ENCODE measurements at regions of chr18 and their contacts with region 1.

Region 1: GRCh38 chr18:63320046-63320689 is 599 bp upstream of the BCL2 start:
- DNase-seq: peak; percentile 77
- H3K4me3 ChIP-seq: peak overlapping the region; percentile 72
- H3K27ac ChIP-seq: no peak overlapping the region
- H3K4me1 ChIP-seq: peaks cover 17% of the 10 kb centered on the region
- CTCF ChIP-seq: no peak

Region 2: GRCh38 chr18:63016270-63016669 is 303.9 kb before region 1 on chr18:
- CTCF ChIA-PET with region 1: no interaction called
- POLR2A ChIA-PET with region 1: no interaction called
- intact Hi-C with region 1: loop called (anchors 1 kb)
- DNase-seq: peak; percentile 39
- H3K4me3 ChIP-seq: no peak overlapping the region
- H3K27ac ChIP-seq: no peak overlapping the region
- H3K4me1 ChIP-seq: no peaks in the 10 kb centered on the region
- CTCF ChIP-seq: peak; percentile 76

Region 3: DNA sequence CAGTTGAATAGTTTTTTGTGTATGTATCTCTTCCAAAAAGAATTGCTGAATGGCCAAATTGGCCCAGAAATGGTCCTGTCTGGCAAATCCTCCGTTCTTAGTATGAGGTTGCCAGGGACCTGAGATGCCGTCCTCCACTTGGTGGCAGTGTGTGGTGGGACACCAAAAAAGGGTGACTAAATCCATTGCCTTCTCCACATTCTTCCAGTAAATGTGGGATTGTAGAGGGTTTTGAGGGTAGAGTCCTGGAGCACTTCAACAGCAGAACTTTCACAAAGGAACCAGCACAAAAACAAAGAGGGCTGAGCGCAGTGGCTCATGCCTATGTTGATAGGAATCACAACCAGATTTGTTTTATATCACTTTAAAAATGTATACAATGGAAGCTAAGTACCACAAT is 200.5 kb before region 1 on chr18:
- CTCF ChIA-PET with region 1: no interaction called
- POLR2A ChIA-PET with region 1: interaction called, 4 read pairs
- intact Hi-C with region 1: loop called (anchors 5 kb)
- DNase-seq: no peak
- H3K4me3 ChIP-seq: no peak overlapping the region
- H3K27ac ChIP-seq: no peak overlapping the region
- H3K4me1 ChIP-seq: no peaks in the 10 kb centered on the region
- CTCF ChIP-seq: peak; percentile 63

Region 4: DNA sequence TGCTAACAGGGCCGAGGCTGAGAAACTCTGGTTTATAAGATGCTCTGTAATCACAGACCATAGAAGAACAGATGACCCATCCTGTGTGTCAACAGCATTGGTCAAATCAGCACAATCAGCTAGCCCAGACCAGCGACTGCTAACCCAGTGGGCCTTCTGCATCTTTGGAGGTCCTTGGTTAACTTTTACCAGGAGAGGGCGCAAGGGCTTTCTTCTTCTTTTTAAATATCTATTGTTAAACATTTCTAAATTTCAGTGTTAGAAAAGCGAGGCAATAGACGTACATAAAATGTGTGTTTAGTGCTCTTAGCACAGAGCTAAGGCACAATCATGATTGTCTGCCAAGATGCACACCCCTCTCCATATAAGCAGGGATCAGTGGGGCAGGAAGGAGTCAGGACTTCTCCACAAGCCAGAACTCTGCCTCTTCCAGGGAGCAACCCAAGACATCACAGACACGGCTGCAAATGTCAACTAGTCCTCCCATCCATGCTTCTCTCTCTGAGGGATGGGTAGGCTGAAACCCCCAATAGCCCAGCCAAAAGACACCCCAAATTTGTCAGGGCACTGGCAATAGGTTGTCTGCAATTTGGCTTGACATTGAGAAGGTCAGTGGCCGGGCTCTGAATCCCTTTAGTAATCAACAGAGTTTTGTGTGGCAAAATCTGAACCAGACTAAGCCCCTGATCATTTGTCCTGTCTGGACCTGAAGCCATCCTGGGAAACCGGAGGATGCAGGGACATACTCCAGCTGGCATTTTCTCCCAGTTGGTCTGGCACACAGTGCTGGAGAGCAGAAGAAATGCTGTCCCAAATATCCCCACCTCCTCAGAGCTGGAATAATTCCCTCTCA is 188.8 kb before region 1 on chr18:
- CTCF ChIA-PET with region 1: interaction called, 4 read pairs
- POLR2A ChIA-PET with region 1: no interaction called
- intact Hi-C with region 1: loop called (anchors 2 kb)
- DNase-seq: peak; percentile 50
- H3K4me3 ChIP-seq: no peak overlapping the region
- H3K27ac ChIP-seq: no peak overlapping the region
- H3K4me1 ChIP-seq: peaks cover 4% of the 10 kb centered on the region
- CTCF ChIP-seq: peak; percentile 77

Region 5: DNA sequence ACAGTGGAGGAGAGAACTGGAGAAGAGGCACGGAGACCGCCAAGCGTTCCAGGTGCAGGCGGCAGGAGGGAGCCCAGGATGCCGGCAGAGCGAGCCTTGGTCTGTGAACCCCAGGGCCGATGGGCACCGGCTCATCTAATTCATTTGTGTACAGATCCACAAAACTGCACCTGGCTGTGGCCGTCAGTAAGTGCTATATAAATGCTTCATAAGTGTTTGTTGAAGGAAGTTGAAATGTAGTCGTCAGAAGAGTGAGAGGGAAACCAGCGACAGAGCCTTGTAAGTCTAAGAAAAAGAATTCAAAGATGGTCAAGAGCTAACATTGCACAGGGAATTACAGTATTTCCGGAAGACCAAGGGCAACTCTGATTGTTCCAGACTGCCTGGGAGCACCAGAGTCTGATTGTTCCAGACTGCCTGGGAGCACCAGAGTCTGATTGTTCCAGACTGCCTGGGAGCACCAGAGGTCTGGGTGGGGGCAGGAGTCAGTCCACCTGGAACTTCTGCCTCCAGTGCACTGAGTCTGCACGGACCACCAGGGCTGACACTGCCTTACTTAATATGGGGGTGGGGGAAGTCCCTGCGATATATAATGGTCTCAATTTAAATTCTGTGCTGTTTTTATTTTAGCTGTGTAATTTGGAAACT is 112.9 kb before region 1 on chr18:
- CTCF ChIA-PET with region 1: no interaction called
- POLR2A ChIA-PET with region 1: interaction called, 3 read pairs
- intact Hi-C with region 1: loop called (anchors 5 kb)
- DNase-seq: peak; percentile 49
- H3K4me3 ChIP-seq: peak overlapping the region; percentile 45
- H3K27ac ChIP-seq: no peak overlapping the region
- H3K4me1 ChIP-seq: peaks cover 39% of the 10 kb centered on the region
- CTCF ChIP-seq: no peak

Region 6: DNA sequence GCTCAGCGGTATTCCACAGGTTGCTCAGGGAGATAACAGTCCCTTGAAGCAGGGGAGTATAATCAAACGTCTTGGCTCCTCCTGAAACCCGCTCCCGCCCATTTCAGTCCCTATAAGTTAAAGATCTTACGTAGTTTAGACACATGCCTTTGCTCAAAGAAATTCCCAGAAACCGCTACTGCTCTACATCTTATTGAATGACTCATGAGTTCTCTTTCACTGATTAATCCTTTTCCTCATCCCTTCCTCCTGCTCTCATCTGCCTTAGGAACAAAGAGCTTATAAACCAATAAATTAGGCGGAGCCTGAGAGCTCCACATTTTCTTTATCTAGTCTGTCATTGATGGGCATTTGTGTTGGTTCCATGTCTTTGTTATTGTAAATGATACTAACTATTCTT is 328.1 kb after region 1 on chr18:
- CTCF ChIA-PET with region 1: no interaction called
- POLR2A ChIA-PET with region 1: no interaction called
- intact Hi-C with region 1: no loop called
- DNase-seq: no peak
- H3K4me3 ChIP-seq: no peak overlapping the region
- H3K27ac ChIP-seq: no peak overlapping the region
- H3K4me1 ChIP-seq: no peaks in the 10 kb centered on the region
- CTCF ChIP-seq: no peak

Measured in OCI-LY7 (cell line).